Activated CD4-positive, alpha-beta T cell treated with anti-CD3 and anti-CD28 coated beads for 36 hours (primary cell): ENCODE measurements at regions of chr11 and their contacts with region 1.

Region 1: GRCh38 chr11:32297611-32298011 is 137.7 kb downstream of the WT1 start:
- DNase-seq: peak; percentile 13
- ATAC-seq: peak; percentile 51
- H3K4me3 Mint-ChIP-seq: no peak overlapping the region
- H3K27ac Mint-ChIP-seq: no peak overlapping the region
- H3K4me1 Mint-ChIP-seq: no peaks in the 10 kb centered on the region
- H3K27me3 Mint-ChIP-seq: no peaks in the 10 kb centered on the region

Region 2: DNA sequence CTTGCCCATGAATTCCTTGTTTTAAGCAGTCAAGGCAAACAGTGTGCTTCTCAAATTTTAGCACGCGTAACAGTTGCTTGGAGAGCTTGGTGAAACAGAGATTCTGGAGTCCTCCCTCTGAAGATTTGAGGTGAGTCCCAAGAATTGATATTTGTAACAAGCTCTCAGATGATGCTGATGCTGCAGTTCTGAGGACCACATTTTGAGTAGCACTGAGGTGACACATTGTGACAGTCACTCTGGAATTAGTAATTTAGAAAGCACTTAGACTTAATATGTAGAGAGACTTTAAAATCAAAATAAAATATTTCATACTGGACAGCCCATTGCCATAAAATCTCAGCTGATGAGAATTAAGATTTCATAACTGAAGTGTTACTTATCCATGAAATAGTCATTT is 889.4 kb before region 1 on chr11:
- CTCF ChIA-PET with region 1: no interaction called
- POLR2A ChIA-PET with region 1: no interaction called
- intact Hi-C with region 1: loop called in 1 of 2 experiments (anchors 2 kb)
- DNase-seq: peak; percentile 17
- ATAC-seq: peak; percentile 77
- H3K4me3 Mint-ChIP-seq: no peak overlapping the region
- H3K27ac Mint-ChIP-seq: no peak overlapping the region
- H3K4me1 Mint-ChIP-seq: peaks cover 8% of the 10 kb centered on the region
- H3K27me3 Mint-ChIP-seq: no peaks in the 10 kb centered on the region

Region 3: GRCh38 chr11:32176223-32176934 is 121.2 kb before region 1 on chr11:
- CTCF ChIA-PET with region 1: interaction called, 6 read pairs
- POLR2A ChIA-PET with region 1: no interaction called
- intact Hi-C with region 1: loop called (anchors 1 to 2 kb)
- DNase-seq: peak; percentile 85
- ATAC-seq: peak; percentile 78
- H3K4me3 Mint-ChIP-seq: no peak overlapping the region
- H3K27ac Mint-ChIP-seq: no peak overlapping the region
- H3K4me1 Mint-ChIP-seq: no peaks in the 10 kb centered on the region
- H3K27me3 Mint-ChIP-seq: peaks cover 7% of the 10 kb centered on the region

Region 4: GRCh38 chr11:32279672-32280071 is 17.9 kb before region 1 on chr11:
- CTCF ChIA-PET with region 1: interaction called, 11 read pairs
- POLR2A ChIA-PET with region 1: no interaction called
- intact Hi-C with region 1: no loop called
- DNase-seq: no peak
- ATAC-seq: no peak
- H3K4me3 Mint-ChIP-seq: no peak overlapping the region
- H3K27ac Mint-ChIP-seq: no peak overlapping the region
- H3K4me1 Mint-ChIP-seq: no peaks in the 10 kb centered on the region
- H3K27me3 Mint-ChIP-seq: peaks cover 22% of the 10 kb centered on the region

Region 5: GRCh38 chr11:32487270-32487669 is 189.7 kb after region 1 on chr11:
- CTCF ChIA-PET with region 1: no interaction called
- POLR2A ChIA-PET with region 1: no interaction called
- intact Hi-C with region 1: no loop called
- DNase-seq: peak; percentile 6
- ATAC-seq: no peak
- H3K4me3 Mint-ChIP-seq: no peak overlapping the region
- H3K27ac Mint-ChIP-seq: no peak overlapping the region
- H3K4me1 Mint-ChIP-seq: no peaks in the 10 kb centered on the region
- H3K27me3 Mint-ChIP-seq: no peaks in the 10 kb centered on the region